ENCODE measurements at regions of chr7 and their contacts with region 1.

Region 1: DNA sequence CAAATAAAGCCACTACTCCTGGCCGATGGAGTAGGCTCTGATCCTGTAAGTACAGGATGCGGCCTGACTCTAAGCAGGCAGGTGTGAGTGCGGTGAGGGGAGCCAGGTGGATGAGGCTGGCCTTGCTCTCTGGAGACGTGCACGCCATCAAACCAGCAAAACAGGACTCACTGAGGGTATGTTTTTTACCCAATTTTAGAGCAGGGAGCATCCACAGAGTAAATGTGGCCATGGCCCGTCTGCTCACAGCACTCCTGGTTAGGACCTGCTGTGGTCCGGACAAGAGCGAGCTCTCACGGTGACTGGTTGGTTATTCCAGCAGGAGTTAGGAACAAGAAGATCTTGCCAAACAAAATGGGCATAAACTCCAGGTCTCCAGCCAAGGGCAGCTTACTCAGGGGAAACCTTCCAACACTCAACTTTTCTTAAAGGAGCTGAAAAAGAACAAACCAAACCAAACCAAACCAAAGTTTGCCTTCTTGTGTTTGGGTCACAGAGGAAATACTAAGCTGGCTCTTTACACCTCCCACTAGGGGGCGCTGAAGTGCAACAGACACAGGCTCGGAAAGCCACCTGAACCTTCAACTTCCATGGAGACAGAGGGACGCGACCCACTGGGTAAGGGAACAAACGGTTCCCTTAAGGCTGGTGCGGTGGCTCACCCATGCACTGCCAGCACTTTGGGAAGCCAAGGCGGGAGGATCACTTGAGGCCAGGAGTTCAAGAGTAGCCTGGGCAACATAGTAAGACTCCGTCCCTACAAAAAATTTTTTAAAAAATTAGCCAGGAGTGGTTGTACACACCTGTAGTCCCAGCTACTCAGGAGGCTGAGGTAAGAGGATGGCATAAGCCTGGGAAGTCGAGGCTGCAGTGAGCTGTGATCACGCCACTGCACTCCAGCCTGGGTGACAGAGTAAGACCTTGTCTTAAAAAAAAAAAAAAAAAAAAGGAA is 122.4 kb downstream of the CLEC2L start:
- DNase-seq: no peak
- H3K4me3 ChIP-seq: no peak overlapping the region
- CTCF ChIP-seq: peak; percentile 83

Region 2: DNA sequence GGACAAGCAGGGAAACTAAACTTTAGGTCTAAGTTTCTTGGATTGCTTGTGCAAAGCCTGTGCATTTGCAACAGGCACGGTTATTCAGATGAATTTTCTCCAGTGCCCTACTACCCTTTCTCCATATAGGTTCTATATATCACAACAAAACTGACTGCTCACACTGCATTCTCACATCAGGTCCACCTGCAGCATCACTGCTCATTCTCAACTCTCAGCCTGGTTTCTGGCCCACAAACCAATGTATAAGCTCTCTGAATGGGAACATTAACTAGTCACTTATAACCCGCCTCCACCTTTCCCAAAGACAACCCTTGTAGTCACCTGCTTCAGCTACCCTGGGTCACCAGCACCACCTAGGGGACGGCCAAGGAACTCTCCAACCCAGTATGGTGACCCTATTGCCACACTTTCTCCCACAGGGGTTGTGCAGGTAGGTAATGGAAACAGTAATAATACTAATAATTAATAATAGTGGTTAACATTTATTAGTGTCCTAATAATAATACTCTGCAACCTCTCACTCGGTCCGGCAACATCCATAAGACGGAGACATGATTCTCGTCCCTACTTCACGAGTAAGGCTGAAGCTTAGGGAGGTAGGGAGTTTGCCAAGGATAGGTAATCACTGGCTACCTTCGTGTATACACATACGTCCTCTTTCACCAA is 25.0 kb before region 1 on chr7:
- CTCF ChIA-PET with region 1: interaction called, 38 read pairs
- POLR2A ChIA-PET with region 1: interaction called, 3 read pairs
- DNase-seq: no peak
- H3K4me3 ChIP-seq: no peak overlapping the region
- CTCF ChIP-seq: peak; percentile 56

Region 3: DNA sequence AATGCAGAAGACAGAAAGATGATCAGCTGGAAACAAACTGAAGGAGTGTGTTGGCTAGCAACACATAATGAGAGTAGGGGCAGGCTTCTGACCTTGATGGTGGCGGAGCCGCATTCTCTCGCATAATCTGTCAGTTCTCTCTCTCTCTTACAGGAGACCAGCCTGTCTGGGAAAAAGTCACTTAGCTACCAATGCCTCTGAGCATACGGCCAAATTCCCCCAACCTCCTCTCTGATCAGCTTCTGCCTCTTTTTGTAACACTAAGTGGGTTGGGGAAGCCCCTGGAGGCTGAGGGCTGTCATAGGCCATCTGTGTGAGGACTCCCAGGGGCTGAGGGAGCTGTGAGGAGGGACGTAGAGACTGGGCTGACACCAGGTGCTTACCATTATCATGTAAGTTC is 27.4 kb after region 1 on chr7:
- CTCF ChIA-PET with region 1: interaction called, 72 read pairs
- POLR2A ChIA-PET with region 1: no interaction called
- DNase-seq: no peak
- H3K4me3 ChIP-seq: no peak overlapping the region
- CTCF ChIP-seq: no peak

Region 4: GRCh38 chr7:139762886-139763285 is 117.0 kb after region 1 on chr7:
- CTCF ChIA-PET with region 1: interaction called, 15 read pairs
- POLR2A ChIA-PET with region 1: no interaction called
- DNase-seq: no peak
- H3K4me3 ChIP-seq: no peak overlapping the region
- CTCF ChIP-seq: no peak

Region 5: GRCh38 chr7:139915864-139916716 is 270.2 kb after region 1 on chr7:
- CTCF ChIA-PET with region 1: interaction called, 11 read pairs
- POLR2A ChIA-PET with region 1: no interaction called
- DNase-seq: peak; percentile 85
- H3K4me3 ChIP-seq: no peak overlapping the region
- CTCF ChIP-seq: no peak

Region 6: GRCh38 chr7:139995017-139995931 is 349.4 kb after region 1 on chr7:
- CTCF ChIA-PET with region 1: interaction called, 192 read pairs
- POLR2A ChIA-PET with region 1: no interaction called
- DNase-seq: no peak
- H3K4me3 ChIP-seq: no peak overlapping the region
- CTCF ChIP-seq: no peak